ENCODE measurements at regions of chr16 and their contacts with region 1.

Region 1: DNA sequence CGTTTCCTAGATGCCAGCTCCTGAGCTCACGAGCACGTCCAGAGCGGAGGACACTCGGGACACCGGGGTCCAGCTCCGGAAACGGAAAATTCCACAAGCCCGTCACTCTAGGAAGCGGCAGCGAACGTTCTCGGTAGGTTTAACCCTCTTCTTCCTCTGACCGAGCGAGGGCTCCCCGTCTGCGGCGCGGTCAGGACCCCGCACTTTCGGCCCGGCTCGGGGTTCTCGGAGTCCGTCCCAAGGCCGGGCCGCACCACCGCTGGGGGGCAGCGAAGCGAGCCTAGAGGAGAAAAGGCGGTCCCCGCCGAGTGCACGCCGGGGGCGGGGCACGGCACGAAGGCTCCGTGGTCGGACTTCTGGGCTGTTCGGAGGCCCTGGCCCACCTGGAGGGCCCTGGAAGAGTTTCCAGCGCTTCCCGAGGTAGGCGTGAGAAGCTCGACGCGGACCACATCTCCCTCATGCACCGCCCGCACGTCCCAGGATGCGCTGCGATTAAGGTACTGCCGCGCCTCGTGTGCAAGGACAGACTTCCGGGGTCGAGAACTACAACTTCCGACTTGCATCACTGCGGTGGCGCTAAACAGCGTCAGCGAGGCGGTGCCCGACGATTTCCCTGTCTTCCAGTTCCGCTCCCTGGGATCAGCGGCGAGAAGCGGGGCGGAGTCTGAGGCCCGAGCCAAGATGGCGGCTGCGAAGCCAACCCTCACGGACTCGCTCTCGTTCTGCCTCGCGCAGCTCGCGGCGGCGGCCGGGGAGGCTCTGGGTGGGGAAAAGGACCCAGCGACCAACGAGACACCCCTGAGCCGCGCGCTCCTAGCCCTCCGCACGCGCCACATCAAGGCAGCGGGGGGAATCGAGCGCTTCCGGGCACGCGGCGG is at the start of gene ARMC5:
- DNase-seq: peak; percentile 98
- H3K4me3 Mint-ChIP-seq: peak within 1 kb of the TSS; percentile 92
- H3K27ac Mint-ChIP-seq: peak within 1 kb of the TSS; percentile 98
- H3K4me1 Mint-ChIP-seq: peaks cover 53% of the 10 kb centered on the region
- H3K27me3 Mint-ChIP-seq: peaks cover 3% of the 10 kb centered on the region

Region 2: GRCh38 chr16:31409433-31409832 is 49.6 kb before region 1 on chr16:
- CTCF ChIA-PET with region 1: no interaction called
- DNase-seq: no peak
- H3K4me3 Mint-ChIP-seq: no peak overlapping the region
- H3K27ac Mint-ChIP-seq: no peak overlapping the region
- H3K4me1 Mint-ChIP-seq: no peaks in the 10 kb centered on the region
- H3K27me3 Mint-ChIP-seq: peaks cover 17% of the 10 kb centered on the region

Region 3: DNA sequence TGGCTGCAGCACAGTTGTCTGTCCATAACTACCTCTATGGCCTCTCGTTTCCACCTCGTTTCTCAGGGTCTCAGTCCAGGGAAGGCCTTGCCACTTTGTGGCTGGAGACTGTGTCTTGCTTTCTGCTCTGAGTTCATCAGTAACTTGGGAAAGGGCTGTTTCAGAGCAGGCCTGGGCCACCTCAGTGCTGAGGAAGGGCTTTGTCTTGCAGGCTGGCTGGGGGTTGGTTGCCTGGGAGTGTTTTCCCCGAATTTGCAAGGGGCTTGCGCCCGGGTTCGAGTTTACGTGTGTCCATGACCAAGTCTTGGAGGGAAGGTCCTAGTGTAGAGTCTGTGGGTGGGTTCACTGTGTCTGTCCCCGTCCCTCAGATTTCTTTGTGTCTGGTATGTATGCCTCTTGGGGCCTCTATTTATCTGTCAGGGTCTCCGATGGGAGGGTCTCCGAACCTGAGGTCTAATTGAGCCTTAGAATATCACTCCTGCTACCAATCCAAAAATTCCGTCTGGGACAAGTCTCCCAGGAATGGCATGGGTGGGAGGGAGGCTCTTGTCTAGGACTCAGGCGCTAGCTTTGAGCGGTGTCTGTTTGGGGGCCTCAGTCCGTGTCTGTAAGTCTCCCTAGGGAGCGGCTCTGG is 12.3 kb after region 1 on chr16:
- CTCF ChIA-PET with region 1: interaction called, 19 read pairs
- DNase-seq: no peak
- H3K4me3 Mint-ChIP-seq: no peak overlapping the region
- H3K27ac Mint-ChIP-seq: no peak overlapping the region
- H3K4me1 Mint-ChIP-seq: peaks cover 32% of the 10 kb centered on the region
- H3K27me3 Mint-ChIP-seq: peaks cover 62% of the 10 kb centered on the region

Region 4: GRCh38 chr16:31476303-31477219 is 17.5 kb after region 1 on chr16:
- CTCF ChIA-PET with region 1: interaction called, 19 read pairs
- DNase-seq: peak; percentile 95
- H3K4me3 Mint-ChIP-seq: peak overlapping the region; percentile 82
- H3K27ac Mint-ChIP-seq: peak overlapping the region; percentile 75
- H3K4me1 Mint-ChIP-seq: peaks cover 33% of the 10 kb centered on the region
- H3K27me3 Mint-ChIP-seq: peaks cover 93% of the 10 kb centered on the region

Region 5: GRCh38 chr16:31696968-31697743 is 238.1 kb after region 1 on chr16:
- CTCF ChIA-PET with region 1: interaction called, 29 read pairs
- DNase-seq: no peak
- H3K4me3 Mint-ChIP-seq: no peak overlapping the region
- H3K27ac Mint-ChIP-seq: no peak overlapping the region
- H3K4me1 Mint-ChIP-seq: peaks cover 22% of the 10 kb centered on the region
- H3K27me3 Mint-ChIP-seq: peaks cover 16% of the 10 kb centered on the region

Region 6: DNA sequence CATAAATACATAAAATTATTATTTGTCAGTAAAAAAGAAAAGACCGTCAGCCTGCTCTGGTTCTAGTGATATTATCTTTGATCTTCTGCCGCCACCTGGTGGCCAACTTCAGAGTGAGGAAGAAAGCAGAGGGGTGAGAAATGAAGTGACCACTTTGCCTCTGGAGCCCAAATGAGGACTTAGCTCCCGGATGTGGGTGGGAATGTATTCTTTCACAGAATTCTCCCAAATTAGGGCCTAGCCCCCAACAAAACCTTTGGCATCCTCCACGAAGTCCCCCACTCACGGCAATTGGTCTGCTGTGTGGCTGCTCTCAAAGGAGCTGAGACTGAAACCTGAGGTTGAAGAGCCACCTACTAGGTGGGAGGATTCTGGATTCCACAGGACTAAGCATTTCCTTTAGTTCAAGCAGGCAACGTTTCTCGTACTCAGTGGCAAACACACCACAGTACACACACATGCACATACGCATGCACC is 409.6 kb after region 1 on chr16:
- CTCF ChIA-PET with region 1: interaction called, 62 read pairs
- DNase-seq: peak; percentile 86
- H3K4me3 Mint-ChIP-seq: peak overlapping the region; percentile 48
- H3K27ac Mint-ChIP-seq: peak overlapping the region; percentile 89
- H3K4me1 Mint-ChIP-seq: peaks cover 72% of the 10 kb centered on the region
- H3K27me3 Mint-ChIP-seq: no peaks in the 10 kb centered on the region

Measured in activated naive CD4-positive, alpha-beta T cell treated with anti-CD3 and anti-CD28 coated beads, Interleukin-2, amount 10 ng/mL, durations not matched to agents 7 days and 5 days (primary cell).